BJ (cell line): ENCODE measurements at regions of chr9 and their contacts with region 1.

Region 1: GRCh38 chr9:31736581-31737179 is 647.8 kb upstream of the ACO1 start:
- DNase-seq: no peak
- H3K4me3 ChIP-seq: no peak overlapping the region
- H3K27me3 ChIP-seq: no peaks in the 10 kb centered on the region
- CTCF ChIP-seq: no peak

Region 2: GRCh38 chr9:30628915-30629564 is 1107.6 kb before region 1 on chr9:
- CTCF ChIA-PET with region 1: no interaction called
- POLR2A ChIA-PET with region 1: no interaction called
- DNase-seq: no peak
- H3K4me3 ChIP-seq: no peak overlapping the region
- H3K27me3 ChIP-seq: no peaks in the 10 kb centered on the region
- CTCF ChIP-seq: no peak

Region 3: GRCh38 chr9:31612336-31613030 is 124.2 kb before region 1 on chr9:
- CTCF ChIA-PET with region 1: no interaction called
- POLR2A ChIA-PET with region 1: no interaction called
- DNase-seq: no peak
- H3K4me3 ChIP-seq: no peak overlapping the region
- H3K27me3 ChIP-seq: no peaks in the 10 kb centered on the region
- CTCF ChIP-seq: no peak

Region 4: GRCh38 chr9:31671011-31671410 is 65.7 kb before region 1 on chr9:
- CTCF ChIA-PET with region 1: no interaction called
- POLR2A ChIA-PET with region 1: interaction called, 12 read pairs
- DNase-seq: no peak
- H3K4me3 ChIP-seq: no peak overlapping the region
- H3K27me3 ChIP-seq: no peaks in the 10 kb centered on the region
- CTCF ChIP-seq: no peak